Aorta (tissue), 5 donors: ENCODE measurements at regions of chr17 and their contacts with region 1.

Region 1: DNA sequence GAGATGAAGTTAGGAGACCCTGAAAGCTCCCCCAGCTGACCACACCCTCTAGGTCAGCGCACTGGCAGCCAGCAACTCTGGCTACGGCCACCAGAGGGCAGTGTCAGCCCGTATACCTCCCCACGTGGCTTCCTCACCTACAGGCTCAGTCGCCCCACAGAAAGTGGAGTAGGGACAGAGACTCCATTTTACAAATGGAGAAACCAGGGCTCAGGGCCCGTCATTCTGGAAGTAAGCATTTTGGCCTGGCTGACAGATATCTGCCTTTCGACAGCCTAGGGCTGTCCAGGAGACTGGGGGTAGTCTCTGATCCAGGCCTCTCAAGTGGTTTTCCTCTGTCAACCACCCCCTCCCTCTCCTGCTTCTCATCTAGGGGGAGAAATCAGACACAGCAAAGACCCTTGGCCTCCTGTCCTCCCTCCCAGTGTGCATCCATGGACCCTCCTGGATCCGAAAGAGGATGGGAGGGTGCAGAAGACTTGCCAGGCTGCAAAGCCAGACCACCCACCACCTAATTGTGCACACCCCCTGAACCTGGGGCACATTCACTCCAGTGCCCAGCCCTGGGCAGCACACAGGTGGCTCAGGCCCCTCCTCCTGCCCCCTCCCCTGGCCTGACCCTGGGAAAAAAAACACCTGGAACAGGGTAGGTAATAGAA is 3.8 kb upstream of the HAP1 start:
- DNase-seq: peak; percentile 79 to 92
- ATAC-seq: peak; percentile 88
- H3K4me3 ChIP-seq: no peak overlapping the region
- H3K27ac ChIP-seq: no peak overlapping the region
- H3K4me1 ChIP-seq: no peaks in the 10 kb centered on the region
- H3K27me3 ChIP-seq: peaks cover 0 to 3% of the 10 kb centered on the region in 2 donors

Region 2: DNA sequence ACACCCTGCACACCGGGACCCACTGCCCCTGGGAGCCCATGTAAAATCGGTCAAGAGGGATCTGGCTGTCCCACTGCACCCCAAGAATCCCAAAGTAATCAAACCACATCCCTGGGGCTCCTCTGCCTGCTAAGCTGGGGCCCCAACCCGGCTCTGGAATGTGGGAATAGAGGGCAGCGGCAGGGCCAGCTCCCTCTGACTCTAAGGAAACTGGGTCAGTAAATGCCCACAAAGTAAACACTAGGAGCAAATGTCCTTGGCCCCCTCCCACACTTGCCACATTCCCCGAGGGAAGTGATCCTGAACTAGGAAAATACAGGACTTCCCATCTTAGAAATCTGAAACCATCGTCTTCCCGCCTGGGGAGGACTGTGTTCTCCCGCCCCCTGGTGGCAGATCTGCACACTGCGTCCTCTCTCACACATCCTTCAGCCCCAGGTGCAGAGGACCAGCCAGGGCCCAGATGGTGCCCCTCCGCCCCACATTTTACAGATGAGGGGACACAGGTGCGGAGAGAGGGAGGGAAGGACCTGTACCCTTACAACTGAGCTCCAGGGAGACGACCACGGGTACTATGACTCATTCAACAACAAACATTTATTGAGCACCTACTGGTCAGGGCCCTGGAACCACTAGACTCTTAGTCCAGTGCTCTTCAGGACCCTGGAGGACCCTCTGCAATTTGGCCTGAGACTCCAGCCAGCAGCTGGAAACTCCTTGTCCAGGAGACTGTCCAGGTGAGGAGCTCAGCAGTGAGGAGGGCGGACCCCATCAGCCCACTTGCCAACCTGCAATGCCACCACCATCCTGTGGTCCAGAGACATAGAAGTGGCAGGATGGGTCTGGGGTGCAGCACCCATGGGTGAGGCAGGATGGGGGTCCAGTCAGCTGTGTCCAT is 63.4 kb after region 1 on chr17:
- intact Hi-C with region 1: loop called (anchors 1 to 2 kb)
- DNase-seq: peak; percentile 81 to 94
- ATAC-seq: peak; percentile 91
- H3K4me3 ChIP-seq: no peak overlapping the region
- H3K27ac ChIP-seq: no peak overlapping the region
- H3K4me1 ChIP-seq: no peaks in the 10 kb centered on the region
- H3K27me3 ChIP-seq: no peaks in the 10 kb centered on the region